Activated CD4-positive, alpha-beta memory T cell treated with anti-CD3 and anti-CD28 coated beads for 36 hours (primary cell): ENCODE measurements at regions of chr22 and their contacts with region 1.

Region 1: DNA sequence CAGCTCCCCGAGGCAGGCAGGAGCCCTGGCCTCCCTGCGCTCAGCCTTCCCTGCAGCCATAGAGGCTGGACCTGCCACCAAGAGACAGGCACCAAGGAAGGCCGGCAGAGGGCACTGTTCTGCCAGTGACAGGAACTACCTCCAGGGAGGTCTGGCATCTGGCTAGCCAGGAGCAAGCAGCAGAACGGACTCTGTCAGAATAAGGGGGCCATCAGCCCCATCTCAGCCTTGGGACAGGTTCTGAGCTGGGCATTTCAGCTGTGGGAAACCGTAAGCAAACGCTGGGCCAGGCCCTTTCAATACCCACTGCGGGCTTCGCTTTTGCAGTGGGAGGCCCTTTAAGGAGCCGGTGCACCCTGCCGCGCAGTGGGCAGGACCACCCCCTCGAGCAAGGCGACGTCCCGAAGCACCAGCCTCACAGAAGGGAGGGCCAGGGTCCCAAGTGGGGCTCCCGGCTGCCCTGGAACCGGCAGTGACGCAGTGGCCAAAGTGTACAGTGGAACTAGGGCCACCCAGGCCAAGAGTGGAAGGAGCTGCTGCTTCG is 18.2 kb downstream of the IFT27 start:
- DNase-seq: peak; percentile 85
- H3K4me3 Mint-ChIP-seq: no peak overlapping the region
- H3K27ac Mint-ChIP-seq: no peak overlapping the region
- H3K4me1 Mint-ChIP-seq: no peaks in the 10 kb centered on the region
- H3K27me3 Mint-ChIP-seq: peaks cover 8% of the 10 kb centered on the region

Region 2: DNA sequence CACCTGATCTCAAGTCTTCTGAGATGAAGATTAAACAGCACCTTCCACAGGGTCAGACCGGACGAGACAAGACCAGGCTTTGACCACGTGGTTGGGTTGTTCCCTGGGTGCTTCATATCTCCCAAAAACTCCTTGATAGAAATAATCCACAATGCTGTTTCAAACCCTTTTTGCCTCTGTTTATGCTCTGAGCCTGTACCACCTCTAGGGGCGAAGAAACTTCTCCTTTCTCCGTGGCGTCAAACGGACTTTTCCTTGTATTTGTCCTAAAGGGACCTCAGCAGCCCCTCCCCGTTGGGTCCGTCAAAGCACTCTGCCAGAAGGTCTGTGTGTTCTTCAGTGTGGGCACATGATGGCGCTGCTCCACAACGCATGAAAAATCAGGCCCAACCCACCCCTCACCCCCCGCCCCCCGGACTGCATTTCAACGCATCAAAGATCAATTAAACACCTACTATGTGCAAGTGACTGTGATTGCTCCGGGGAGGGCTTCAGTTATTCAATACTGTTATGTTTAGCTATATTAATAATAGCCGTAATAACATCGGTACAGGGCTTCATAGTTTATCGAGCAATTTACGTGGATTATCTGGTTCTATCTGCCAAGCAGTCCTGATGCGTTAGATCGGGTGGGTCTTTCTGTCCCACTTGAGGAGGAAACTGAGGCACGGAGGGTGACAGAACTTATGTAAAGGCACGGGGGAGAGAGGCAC is 211.5 kb before region 1 on chr22:
- CTCF ChIA-PET with region 1: interaction called, 6 read pairs
- POLR2A ChIA-PET with region 1: no interaction called
- intact Hi-C with region 1: loop called (anchors 1 kb)
- DNase-seq: peak; percentile 57
- H3K4me3 Mint-ChIP-seq: no peak overlapping the region
- H3K27ac Mint-ChIP-seq: no peak overlapping the region
- H3K4me1 Mint-ChIP-seq: peaks cover 16% of the 10 kb centered on the region
- H3K27me3 Mint-ChIP-seq: peaks cover 10% of the 10 kb centered on the region

Region 3: DNA sequence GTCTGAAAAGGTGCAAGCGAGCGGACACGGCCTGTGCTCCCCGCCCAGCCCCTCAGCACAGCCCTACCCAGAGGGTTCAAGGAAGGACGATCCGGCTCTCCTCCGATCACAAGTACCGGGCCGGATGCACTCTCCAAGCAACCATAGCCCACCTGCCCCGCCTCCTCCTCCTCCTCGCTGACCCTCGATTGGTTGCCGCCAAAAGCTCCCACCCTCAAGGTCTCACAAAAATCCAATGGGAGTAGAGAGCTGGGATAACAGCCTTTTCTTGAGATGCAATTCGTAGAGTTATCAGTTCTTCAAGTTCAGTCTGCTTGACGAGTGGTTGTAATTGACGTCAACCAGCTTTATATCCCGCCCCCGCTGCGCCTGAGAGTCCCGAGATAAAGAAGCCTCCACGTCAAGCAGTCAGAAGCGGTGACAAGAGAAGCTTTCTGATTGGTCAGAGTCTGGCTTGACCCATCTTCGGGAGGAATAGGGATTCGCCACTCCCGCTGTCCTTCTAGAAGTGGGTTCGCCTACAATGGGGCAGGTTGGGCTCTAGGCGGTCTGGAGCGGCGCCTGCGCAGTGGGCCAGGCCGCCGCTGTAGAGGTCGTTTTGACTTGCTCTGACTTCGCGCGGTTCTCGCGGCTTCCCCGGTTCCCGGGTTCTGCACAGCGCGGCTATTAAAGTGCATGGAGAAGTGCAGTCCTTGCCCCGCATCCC is 18.4 kb after region 1 on chr22 and contains the start of gene IFT27:
- CTCF ChIA-PET with region 1: interaction called, 19 read pairs
- POLR2A ChIA-PET with region 1: no interaction called
- intact Hi-C with region 1: no loop called
- DNase-seq: peak; percentile 99
- H3K4me3 Mint-ChIP-seq: peak within 1 kb of the TSS; percentile 84
- H3K27ac Mint-ChIP-seq: peak within 1 kb of the TSS; percentile 90
- H3K4me1 Mint-ChIP-seq: peaks cover 30% of the 10 kb centered on the region
- H3K27me3 Mint-ChIP-seq: no peaks in the 10 kb centered on the region
- total RNA-seq, gene IFT27: 27.9 to 32.1 TPM

Region 4: DNA sequence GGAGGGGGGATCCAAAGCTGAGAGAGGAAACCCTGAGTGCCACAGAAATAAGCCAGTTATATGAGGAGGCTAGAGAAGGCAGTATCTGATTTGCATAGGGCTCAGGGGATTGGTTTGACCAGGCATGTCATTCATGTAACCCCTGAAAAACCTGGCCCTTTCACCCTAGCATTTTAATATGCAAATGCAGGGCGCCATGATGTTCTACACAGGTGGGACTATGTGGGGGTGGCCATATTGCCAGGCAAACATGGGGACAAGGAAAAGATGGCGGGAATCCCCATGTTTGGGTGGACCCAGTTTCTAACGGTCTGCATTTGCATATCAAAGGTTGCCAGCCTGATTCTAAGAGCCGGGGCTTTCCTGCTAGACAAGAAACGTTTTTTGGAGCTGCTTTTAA is 182.9 kb after region 1 on chr22:
- CTCF ChIA-PET with region 1: no interaction called
- POLR2A ChIA-PET with region 1: no interaction called
- intact Hi-C with region 1: no loop called
- DNase-seq: peak; percentile 35
- H3K4me3 Mint-ChIP-seq: no peak overlapping the region
- H3K27ac Mint-ChIP-seq: no peak overlapping the region
- H3K4me1 Mint-ChIP-seq: peaks cover 11% of the 10 kb centered on the region
- H3K27me3 Mint-ChIP-seq: no peaks in the 10 kb centered on the region